Activated CD4-positive, alpha-beta memory T cell treated with anti-CD3 and anti-CD28 coated beads for 36 hours (primary cell): ENCODE measurements at regions of chr7 and their contacts with region 1.

Region 1: DNA sequence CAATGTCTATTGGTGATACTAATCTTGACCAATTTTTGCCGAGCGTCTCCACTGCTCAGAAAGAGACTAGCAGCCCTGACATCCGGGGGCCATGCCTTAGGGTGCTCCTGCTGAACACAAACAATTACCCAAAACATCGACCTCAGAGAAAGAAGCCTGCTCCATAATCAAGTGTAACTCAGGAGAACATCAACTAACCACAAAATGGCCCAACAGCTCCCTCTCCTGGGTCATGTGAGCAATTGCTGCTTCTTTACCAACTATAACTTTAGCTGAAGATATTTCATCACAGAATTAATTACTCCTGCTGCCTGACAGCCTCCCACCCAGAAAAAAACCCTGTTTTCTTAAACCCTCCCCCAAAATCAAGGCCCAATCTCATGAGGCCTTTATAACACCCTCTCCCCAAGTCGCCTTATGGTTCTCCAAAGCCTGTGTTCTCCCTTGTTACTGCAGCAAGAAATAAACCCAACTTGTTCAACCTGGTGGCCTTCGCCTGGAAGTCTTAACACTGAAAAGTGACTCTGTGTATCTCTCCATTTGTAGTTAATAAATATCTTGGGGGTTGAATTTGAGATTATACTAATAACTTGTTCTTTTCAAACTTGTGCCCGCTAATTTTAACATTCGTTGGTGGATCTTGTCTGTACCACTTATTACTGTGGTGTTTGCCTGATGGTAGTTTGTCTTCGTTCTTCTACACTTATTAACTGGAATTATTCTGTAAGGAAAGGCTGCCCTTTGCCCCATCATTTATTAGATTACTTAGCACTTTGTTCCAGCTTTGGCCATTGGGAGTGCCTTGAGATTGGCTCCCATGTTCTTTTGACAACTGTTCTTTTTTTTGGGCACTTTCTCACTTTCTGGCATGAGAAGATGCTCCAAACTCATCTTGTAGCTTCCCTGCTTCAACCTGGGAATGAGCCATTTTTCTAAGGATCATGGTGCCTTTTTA is 21.2 kb upstream of the RAMP3 start:
- DNase-seq: peak; percentile 81
- H3K4me3 Mint-ChIP-seq: no peak overlapping the region
- H3K27ac Mint-ChIP-seq: peak overlapping the region; percentile 9
- H3K4me1 Mint-ChIP-seq: peaks cover 9% of the 10 kb centered on the region
- H3K27me3 Mint-ChIP-seq: peaks cover 1% of the 10 kb centered on the region

Region 2: DNA sequence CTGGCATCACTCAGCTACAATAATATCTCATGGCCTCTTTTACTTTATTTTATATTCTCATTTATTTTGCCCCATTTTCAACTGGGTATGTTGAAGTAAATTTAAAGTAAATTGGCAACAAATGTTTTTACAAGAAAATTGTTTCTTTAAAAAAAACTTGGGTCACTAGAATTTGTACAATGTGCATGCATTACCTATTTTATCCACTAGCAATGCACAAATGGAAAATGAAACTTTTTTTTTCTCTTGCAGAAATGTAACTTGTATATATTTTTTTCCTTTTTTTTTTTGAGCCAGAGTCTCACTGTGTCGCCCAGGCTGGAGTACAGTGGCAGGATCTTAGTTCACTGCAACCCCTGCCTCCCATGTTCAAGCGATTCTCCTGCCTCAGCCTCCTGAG is 278.2 kb before region 1 on chr7:
- CTCF ChIA-PET with region 1: interaction called, 38 read pairs
- POLR2A ChIA-PET with region 1: no interaction called
- intact Hi-C with region 1: loop called (anchors 1 kb)
- DNase-seq: no peak
- H3K4me3 Mint-ChIP-seq: no peak overlapping the region
- H3K27ac Mint-ChIP-seq: no peak overlapping the region
- H3K4me1 Mint-ChIP-seq: peaks cover 14% of the 10 kb centered on the region
- H3K27me3 Mint-ChIP-seq: no peaks in the 10 kb centered on the region

Region 3: DNA sequence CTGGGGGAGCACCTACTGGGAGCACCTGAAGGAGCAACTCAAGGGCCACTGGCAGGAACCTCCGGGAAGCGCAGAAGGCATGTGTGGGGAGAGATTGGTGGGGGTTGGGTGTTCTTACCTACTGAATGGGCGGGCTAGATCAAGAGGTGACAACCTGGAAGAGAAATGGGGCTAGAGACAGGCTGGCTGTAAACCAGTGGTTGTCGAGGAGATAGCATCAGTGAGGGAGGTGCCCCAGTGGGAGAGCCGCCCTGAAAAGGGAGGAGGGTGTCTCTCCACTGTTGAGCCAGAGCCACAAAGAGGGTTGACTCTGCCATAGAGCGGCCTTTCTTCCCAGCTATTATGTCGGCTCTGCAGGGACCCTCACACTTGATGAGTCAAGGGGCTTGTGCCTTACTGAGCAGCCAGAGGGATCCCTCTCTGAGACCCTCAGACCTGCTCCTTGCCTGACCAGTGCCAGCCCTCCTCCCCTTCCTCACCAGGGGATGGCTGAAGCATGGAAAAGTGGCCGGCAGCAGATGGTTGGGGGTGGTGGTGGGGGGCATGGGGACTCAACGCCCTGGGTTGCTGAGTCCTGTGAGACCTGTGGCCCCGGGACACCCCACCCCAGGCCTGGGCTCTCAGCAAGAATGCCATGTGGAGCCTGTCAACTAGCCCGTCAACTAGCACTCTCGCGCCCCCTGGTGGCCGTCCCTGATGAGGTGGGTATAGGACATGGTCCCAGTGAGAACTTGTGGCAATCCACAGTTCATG is 214.6 kb before region 1 on chr7:
- CTCF ChIA-PET with region 1: interaction called, 10 read pairs
- POLR2A ChIA-PET with region 1: no interaction called
- intact Hi-C with region 1: no loop called
- DNase-seq: peak; percentile 97
- H3K4me3 Mint-ChIP-seq: no peak overlapping the region
- H3K27ac Mint-ChIP-seq: no peak overlapping the region
- H3K4me1 Mint-ChIP-seq: peaks cover 15% of the 10 kb centered on the region
- H3K27me3 Mint-ChIP-seq: no peaks in the 10 kb centered on the region

Region 4: GRCh38 chr7:45111298-45112223 is 24.8 kb before region 1 on chr7 and contains the start of gene TBRG4:
- CTCF ChIA-PET with region 1: interaction called, 20 read pairs
- POLR2A ChIA-PET with region 1: interaction called, 15 read pairs
- intact Hi-C with region 1: loop called (anchors 1 kb)
- DNase-seq: peak; percentile 96
- H3K4me3 Mint-ChIP-seq: peak within 1 kb of the TSS; percentile 96
- H3K27ac Mint-ChIP-seq: peak within 1 kb of the TSS; percentile 94
- H3K4me1 Mint-ChIP-seq: peaks cover 40% of the 10 kb centered on the region
- H3K27me3 Mint-ChIP-seq: no peaks in the 10 kb centered on the region
- total RNA-seq, gene TBRG4: 135 to 137 TPM

Region 5: DNA sequence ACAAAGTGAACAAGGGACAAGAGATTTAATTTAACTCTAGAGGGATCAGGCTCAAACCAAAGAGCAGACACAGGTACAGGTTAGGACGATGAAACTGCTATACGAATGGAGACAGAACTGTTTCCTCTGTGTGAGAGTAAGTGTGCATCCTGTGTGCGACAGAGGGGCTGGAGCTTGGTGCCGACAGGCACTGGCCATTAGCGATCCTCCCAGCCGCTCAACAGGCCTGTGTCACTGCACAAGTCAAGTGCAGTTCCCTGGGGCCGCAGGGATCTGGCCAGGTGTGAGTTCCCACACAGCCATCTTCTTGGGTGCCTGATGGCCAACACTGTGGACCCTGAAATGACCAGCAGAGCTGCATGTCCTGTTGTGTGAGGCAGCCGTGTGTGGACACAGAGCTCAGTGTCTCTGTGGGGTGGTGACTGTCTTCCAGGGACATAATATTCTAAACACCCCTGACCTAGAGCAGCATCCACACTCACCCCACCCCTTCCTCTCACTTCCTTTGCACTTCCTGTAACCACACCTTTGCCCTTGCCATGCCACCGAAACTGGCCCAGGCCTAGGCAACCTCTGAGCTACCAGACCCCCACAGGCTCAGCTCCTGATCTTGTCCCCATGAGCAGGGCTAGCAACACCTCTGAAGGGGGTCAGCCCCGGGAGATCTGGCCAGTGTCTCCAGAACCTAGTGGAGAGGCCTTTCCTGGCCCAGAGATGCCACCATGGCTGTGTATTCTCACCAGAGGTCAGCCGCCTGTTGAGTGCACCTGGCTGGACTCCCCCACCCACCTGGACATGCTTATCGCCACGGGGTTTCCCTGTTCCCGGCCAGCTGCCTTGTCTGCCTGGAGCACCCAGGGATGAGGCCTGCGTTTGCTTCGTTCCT is 13.2 kb before region 1 on chr7:
- CTCF ChIA-PET with region 1: interaction called, 15 read pairs
- POLR2A ChIA-PET with region 1: no interaction called
- intact Hi-C with region 1: no loop called
- DNase-seq: no peak
- H3K4me3 Mint-ChIP-seq: no peak overlapping the region
- H3K27ac Mint-ChIP-seq: peak overlapping the region; percentile 60
- H3K4me1 Mint-ChIP-seq: peaks cover 16% of the 10 kb centered on the region
- H3K27me3 Mint-ChIP-seq: no peaks in the 10 kb centered on the region